ENCODE measurements at regions of chr12 and their contacts with region 1.

Region 1: GRCh38 chr12:46933947-46934346 is 108.2 kb upstream of the SLC38A4 start:
- DNase-seq: no peak
- ATAC-seq: peak in 5 of 8 donors; percentile 54 to 86 (median 60)
- H3K4me3 ChIP-seq: no peak overlapping the region
- H3K27ac ChIP-seq: no peak overlapping the region
- H3K4me1 ChIP-seq: no peaks in the 10 kb centered on the region
- H3K27me3 ChIP-seq: no peaks in the 10 kb centered on the region
- CTCF ChIP-seq: peak; percentile 28 to 70 (median 63)

Region 2: DNA sequence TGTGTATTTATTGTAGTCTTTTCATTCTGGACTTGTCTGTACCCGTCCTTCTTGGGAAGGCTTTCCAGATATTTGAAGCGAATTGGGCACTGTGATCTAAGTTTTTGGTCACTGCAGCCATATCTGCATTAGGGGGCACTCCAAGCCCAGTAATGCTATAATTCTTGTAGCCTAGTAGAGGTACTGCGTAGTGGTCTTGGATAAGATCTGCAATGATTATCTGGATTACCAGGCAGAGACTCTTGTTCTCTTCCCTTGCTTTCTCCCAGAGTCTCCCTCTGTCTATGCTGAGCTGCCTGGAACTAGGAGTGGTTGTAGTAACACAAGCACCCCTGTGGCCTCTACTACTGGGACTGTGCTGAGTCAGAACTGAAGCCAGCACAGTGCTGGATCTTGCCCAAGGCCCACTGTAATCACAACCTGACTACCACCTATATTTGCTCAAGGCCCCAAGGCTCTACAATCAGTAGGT is 591.3 kb before region 1 on chr12:
- intact Hi-C with region 1: loop called in 6 of 10 experiments (anchors 2 to 10 kb)
- DNase-seq: peak in 1 of 2 donors; percentile 32
- ATAC-seq: peak; percentile 47 to 89 (median 79)
- H3K4me3 ChIP-seq: no peak overlapping the region
- H3K27ac ChIP-seq: no peak overlapping the region
- H3K4me1 ChIP-seq: peaks cover 0 to 8% (median 0%) of the 10 kb centered on the region in 9 donors
- H3K27me3 ChIP-seq: no peaks in the 10 kb centered on the region
- CTCF ChIP-seq: peak; percentile 44 to 86 (median 66)

Region 3: GRCh38 chr12:46770501-46771183 is 163.3 kb before region 1 on chr12:
- intact Hi-C with region 1: loop called in 1 of 10 experiments (anchors 1 kb)
- DNase-seq: peak in 1 of 2 donors; percentile 4
- ATAC-seq: peak in 5 of 8 donors; percentile 46 to 79 (median 64)
- H3K4me3 ChIP-seq: no peak overlapping the region
- H3K27ac ChIP-seq: peak overlapping the region in 2 of 10 donors; percentile 18 to 21
- H3K4me1 ChIP-seq: peaks cover 0 to 19% (median 10%) of the 10 kb centered on the region in 9 donors
- H3K27me3 ChIP-seq: no peaks in the 10 kb centered on the region
- CTCF ChIP-seq: no peak

Region 4: DNA sequence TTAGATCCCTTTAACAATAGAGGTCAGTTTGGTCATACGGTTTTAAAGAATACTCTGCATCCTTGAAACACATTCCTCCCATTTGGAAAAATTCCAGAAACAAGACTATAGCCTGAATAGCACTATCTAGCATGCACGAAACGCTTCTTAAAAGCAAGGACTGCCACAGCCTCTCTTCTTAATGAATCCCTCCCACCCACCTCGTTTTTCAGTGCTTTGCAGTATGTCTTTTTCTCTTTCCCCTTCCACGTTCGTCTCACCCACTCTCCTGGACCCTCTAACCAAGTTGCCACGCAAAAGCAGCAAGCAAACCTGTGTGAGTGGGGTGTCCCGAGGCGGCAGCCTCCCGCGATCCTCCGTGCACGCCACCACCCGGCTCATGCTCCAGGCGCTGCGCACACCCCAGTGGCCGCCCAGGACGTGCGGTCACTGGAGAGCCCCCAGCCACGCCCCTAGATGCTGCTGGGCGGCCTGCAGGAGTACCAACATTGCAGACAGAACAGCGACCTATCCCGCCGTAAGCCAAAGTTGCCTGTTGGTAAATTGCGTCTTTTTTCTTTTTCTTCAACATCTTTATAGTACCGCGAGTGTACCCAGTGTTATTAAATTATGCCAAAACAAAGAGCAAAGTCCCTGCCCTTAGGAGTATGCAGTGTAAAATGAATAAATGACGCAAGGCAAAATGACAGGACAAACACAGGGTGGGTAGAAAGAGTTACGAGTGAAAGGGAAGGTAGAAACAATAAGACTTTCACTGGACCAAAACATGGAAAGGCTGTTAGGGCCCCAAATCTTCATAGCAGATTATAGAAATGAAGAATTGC is 108.1 kb before region 1 on chr12 and contains the start of gene SLC38A4:
- intact Hi-C with region 1: loop called in 1 of 10 experiments (anchors 10 kb)
- DNase-seq: peak in 1 of 2 donors; percentile 58
- ATAC-seq: peak; percentile 47 to 98 (median 83)
- H3K4me3 ChIP-seq: peak within 1 kb of the TSS in 9 of 10 donors; percentile 2 to 47 (median 27)
- H3K27ac ChIP-seq: no peak within 1 kb of the TSS
- H3K4me1 ChIP-seq: peaks cover 0 to 9% (median under 1%) of the 10 kb centered on the region in 9 donors
- H3K27me3 ChIP-seq: peaks cover 0 to 73% (median 37%) of the 10 kb centered on the region in 7 donors
- CTCF ChIP-seq: peak in 5 of 9 donors; percentile 8 to 37 (median 27)
- total RNA-seq, gene SLC38A4: 0.11 to 2.3 (median 0.67) TPM in 8 of 10 donors, not detected in the others

Region 5: DNA sequence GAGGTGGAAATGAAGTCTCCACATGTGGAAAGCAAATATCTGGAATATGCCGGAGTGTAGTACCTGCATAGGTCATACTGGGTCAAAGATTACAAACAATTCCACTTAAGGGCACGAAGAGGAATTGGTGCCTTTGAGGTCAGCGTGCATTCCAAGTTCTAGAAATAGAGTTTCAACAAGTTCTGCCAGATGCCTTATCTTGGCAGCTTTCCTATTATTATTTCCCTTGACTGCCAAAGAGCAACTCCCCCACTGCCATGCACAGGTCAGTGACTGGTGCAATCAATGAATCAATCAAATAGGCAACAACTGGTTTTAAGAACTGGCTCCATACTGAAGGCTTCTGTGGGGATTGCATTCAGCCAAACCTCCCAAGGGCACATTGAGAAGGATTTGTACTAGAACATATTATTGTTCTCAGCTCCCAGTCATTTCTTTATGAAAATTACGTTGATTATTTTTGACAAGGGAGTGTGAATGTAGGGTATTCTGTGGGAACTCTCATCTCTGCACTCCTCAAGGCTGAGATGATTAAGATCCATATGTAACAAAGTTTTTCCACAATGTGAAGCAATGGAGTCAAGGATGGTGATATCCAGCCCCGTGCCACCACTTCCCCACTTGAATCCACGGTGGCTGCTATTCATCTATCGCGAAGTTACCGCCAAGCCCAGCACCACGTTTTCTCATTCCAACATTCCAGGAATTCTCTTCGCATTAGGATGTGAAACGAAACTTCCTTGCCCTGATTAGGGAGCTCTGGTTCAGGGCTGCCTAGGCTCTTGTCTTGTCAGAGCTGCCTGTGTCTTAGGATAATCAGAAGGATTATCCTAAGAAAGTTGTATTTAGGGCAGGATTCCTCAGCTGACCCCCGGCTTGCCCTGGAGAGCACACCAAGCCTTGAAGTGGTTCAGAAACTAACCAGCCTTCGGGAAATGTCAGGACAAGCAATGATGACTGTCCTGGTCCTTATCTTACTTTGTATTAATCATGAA is 30.3 kb after region 1 on chr12:
- intact Hi-C with region 1: loop called in 1 of 10 experiments (anchors 1 kb)
- DNase-seq: peak in 1 of 2 donors; percentile 29
- ATAC-seq: peak; percentile 61 to 82 (median 70)
- H3K4me3 ChIP-seq: no peak overlapping the region
- H3K27ac ChIP-seq: peak overlapping the region; percentile 63 to 89 (median 74)
- H3K4me1 ChIP-seq: peaks cover 0 to 38% (median 27%) of the 10 kb centered on the region in 9 donors
- H3K27me3 ChIP-seq: no peaks in the 10 kb centered on the region
- CTCF ChIP-seq: no peak

Region 6: GRCh38 chr12:46977871-46978375 is 44.0 kb after region 1 on chr12:
- intact Hi-C with region 1: no loop called
- DNase-seq: no peak
- ATAC-seq: no peak
- H3K4me3 ChIP-seq: no peak overlapping the region
- H3K27ac ChIP-seq: no peak overlapping the region
- H3K4me1 ChIP-seq: no peaks in the 10 kb centered on the region
- H3K27me3 ChIP-seq: no peaks in the 10 kb centered on the region
- CTCF ChIP-seq: no peak

Measured in heart right ventricle (tissue), 16 donors.